CD4-positive, alpha-beta memory T cell (primary cell): ENCODE measurements at regions of chr21 and their contacts with region 1.

Region 1: DNA sequence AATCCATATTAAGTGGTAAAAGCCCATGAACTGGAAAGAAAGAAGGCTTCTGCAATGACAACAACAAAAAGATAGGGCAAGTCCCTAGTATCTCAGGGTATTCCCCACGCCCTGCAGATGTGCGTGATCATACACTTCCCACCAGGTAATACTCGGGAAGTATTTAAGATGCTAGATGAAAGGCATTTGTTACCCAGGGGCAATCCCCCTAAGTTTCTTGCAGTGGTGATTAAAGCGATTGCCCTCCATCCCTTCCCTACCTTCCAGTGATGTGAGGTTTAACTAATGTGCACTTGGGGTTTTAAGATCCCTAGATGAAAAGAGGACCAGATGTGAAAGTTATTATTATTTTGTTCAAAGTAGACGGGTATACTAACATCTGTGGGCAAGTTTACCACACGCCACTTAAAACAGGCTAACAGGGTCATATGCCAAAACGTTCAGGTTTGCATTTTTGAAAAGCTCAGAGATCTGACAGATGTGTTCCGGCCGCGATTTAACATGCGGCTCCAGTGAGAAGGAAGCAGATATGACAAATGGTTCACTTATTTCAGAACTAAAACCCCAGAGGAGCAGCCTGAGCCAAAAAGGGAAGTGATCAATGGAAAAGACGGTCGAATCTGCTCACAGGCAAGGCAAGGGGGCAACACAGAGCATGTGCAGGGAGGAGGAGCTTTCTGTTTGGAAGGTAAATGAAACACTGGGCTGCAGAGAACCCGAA is 17.4 kb downstream of the TIAM1 start:
- DNase-seq: peak; percentile 41 to 69 (median 52)
- H3K4me3 ChIP-seq: no peak overlapping the region
- H3K4me3 Mint-ChIP-seq: peak overlapping the region; percentile 73 to 90 (median 79)
- H3K27ac ChIP-seq: peak overlapping the region; percentile 35
- H3K27ac Mint-ChIP-seq: peak overlapping the region; percentile 61 to 94 (median 82)
- H3K4me1 ChIP-seq: peaks cover 18% of the 10 kb centered on the region
- H3K4me1 Mint-ChIP-seq: peaks cover 18 to 33% (median 21%) of the 10 kb centered on the region in 4 donors
- H3K27me3 ChIP-seq: no peaks in the 10 kb centered on the region
- H3K27me3 Mint-ChIP-seq: no peaks in the 10 kb centered on the region

Region 2: DNA sequence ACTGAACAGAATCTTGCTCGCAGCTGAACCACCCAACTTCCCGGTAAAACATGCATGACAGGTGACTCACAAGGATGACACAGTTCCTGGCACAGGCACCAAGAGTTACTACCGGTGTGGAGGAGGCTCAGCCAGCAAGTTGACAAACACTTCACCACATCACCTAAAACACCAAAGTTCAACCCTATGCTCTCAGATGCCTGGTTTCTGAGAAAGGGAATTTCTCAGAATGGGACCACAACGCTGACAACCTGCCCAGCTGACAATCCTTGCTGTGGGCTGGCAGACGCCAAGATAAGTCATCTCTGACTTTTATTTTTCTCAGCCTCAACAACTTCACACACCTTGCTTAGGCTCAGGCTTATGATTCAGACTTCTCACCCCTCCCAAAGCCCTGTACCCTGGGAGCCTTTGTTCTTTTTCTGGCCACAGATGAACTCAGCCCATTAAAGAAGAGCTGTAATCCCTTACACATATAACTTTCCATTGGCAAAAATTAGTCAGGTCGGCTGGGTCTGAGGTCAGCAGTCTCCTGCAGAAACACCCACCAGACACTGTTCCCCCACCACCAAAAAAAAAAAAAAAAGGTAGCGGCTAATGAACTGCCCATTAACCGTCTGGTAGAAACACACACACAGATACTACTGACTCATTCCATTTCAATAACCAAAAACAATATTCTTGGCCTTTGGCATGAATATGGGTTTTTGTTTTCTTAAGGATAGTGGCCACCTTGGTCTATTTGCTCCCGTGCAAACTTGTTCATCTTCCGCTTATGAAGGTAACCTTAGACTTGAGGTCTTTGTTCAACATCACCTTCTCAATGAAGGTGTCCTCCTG is 28.1 kb after region 1 on chr21:
- CTCF ChIA-PET with region 1: no interaction called
- POLR2A ChIA-PET with region 1: no interaction called
- intact Hi-C with region 1: loop called (anchors 2 kb)
- DNase-seq: peak; percentile 74 to 92 (median 84)
- H3K4me3 ChIP-seq: no peak overlapping the region
- H3K4me3 Mint-ChIP-seq: peak overlapping the region in 7 of 8 donors; percentile 36 to 75 (median 64)
- H3K27ac ChIP-seq: peak overlapping the region; percentile 33
- H3K27ac Mint-ChIP-seq: peak overlapping the region; percentile 29 to 93 (median 90)
- H3K4me1 ChIP-seq: peaks cover 49% of the 10 kb centered on the region
- H3K4me1 Mint-ChIP-seq: peaks cover 29 to 60% (median 36%) of the 10 kb centered on the region in 4 donors
- H3K27me3 ChIP-seq: no peaks in the 10 kb centered on the region
- H3K27me3 Mint-ChIP-seq: no peaks in the 10 kb centered on the region